ENCODE measurements at regions of chr11 and their contacts with region 1.

Region 1: GRCh38 chr11:14300661-14301304 is 58.2 kb downstream of the RRAS2 start:
- DNase-seq: peak in 2 of 3 donors; percentile 27 to 54
- ATAC-seq: peak; percentile 94 to 98 (median 97)
- H3K4me3 ChIP-seq: no peak overlapping the region
- H3K27ac ChIP-seq: no peak overlapping the region
- H3K4me1 ChIP-seq: peaks cover 0 to 4% (median 0%) of the 10 kb centered on the region in 4 donors
- H3K27me3 ChIP-seq: no peaks in the 10 kb centered on the region
- CTCF ChIP-seq: peak; percentile 72 to 90 (median 82)
- POLR2A ChIP-seq: no peak

Region 2: DNA sequence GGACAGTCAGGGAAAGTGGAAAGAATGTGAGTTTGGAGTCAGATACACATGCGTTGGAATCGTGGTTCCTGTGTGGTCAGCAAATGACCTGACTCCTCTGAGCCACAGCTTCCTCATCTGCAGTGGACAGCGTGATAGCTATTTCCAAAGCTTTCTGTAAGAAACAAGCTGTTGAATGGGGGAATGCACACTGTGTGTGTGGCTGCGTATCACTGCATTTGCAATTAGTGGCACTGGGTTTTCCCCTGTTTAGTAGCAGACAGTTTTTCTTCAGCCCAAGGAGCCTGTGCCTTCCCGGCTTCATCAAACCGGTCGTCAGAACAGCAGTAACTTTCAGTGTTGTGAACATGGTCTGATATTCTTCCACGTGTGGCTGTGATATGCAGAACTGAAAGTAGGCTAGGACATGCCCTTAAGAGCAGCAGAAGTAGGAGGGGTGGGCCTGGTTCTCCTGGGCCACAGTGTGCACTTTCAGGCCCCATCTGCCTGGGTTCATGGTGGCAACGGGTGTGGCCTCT is 63.3 kb before region 1 on chr11:
- intact Hi-C with region 1: no loop called
- DNase-seq: no peak
- ATAC-seq: peak; percentile 37 to 70 (median 48)
- H3K4me3 ChIP-seq: no peak overlapping the region
- H3K27ac ChIP-seq: no peak overlapping the region
- H3K4me1 ChIP-seq: no peaks in the 10 kb centered on the region
- H3K27me3 ChIP-seq: no peaks in the 10 kb centered on the region
- CTCF ChIP-seq: no peak
- POLR2A ChIP-seq: no peak

Region 3: DNA sequence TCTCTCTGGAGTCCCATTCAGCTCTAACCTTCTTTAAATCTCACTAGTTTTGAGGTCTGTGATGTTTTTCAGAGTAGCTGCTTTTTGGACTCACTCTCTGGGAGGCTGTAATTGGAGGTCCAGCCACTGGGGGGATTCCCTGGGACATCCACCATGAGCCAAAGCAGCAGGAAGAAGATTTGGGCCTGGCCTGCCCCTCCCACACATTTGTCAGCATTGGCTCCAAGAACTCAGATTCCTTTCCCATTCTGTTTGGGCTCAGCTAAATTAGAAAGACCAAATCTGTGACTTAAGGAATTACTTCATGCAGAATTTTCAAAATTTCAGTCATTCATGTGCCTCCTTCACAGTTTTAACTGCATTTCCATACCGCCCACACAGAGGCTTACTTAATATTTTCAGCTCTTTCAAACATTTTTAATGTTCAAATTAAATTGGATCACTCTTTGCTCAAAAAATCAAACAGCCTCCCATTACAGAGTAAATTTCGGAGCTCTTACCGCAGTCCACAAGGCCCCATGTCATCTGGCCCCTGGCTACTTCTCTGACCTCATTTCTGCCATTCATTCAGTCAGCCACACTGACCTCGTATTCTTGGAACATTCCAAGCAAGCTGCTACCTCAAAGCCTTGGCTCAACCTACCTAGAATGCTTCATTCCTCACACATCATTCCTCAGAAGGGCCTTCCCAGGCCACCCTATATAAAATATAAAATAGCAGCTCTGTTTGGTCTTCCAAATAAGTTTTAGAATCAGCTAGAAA is 112.7 kb after region 1 on chr11:
- intact Hi-C with region 1: loop called in 1 of 2 experiments (anchors 10 kb)
- DNase-seq: no peak
- ATAC-seq: peak in 1 of 4 donors; percentile 18
- H3K4me3 ChIP-seq: no peak overlapping the region
- H3K27ac ChIP-seq: no peak overlapping the region
- H3K4me1 ChIP-seq: no peaks in the 10 kb centered on the region
- H3K27me3 ChIP-seq: no peaks in the 10 kb centered on the region
- CTCF ChIP-seq: no peak
- POLR2A ChIP-seq: no peak

Region 4: GRCh38 chr11:14454861-14455632 is 154.3 kb after region 1 on chr11:
- intact Hi-C with region 1: loop called in 1 of 2 experiments (anchors 10 kb)
- DNase-seq: no peak
- ATAC-seq: peak; percentile 46 to 72 (median 55)
- H3K4me3 ChIP-seq: no peak overlapping the region
- H3K27ac ChIP-seq: no peak overlapping the region
- H3K4me1 ChIP-seq: no peaks in the 10 kb centered on the region
- H3K27me3 ChIP-seq: no peaks in the 10 kb centered on the region
- CTCF ChIP-seq: peak; percentile 31 to 60 (median 56)
- POLR2A ChIP-seq: no peak

Region 5: GRCh38 chr11:14852571-14853177 is 551.9 kb after region 1 on chr11:
- intact Hi-C with region 1: no loop called
- DNase-seq: no peak
- ATAC-seq: peak; percentile 38 to 69 (median 56)
- H3K4me3 ChIP-seq: no peak overlapping the region
- H3K27ac ChIP-seq: no peak overlapping the region
- H3K4me1 ChIP-seq: no peaks in the 10 kb centered on the region
- H3K27me3 ChIP-seq: no peaks in the 10 kb centered on the region
- CTCF ChIP-seq: no peak
- POLR2A ChIP-seq: no peak

Measured in right lobe of liver (tissue), 6 donors.